PC-3 (cell line): ENCODE measurements at regions of chr1 and their contacts with region 1.

Region 1: GRCh38 chr1:156689035-156689952 is 12.1 kb upstream of the NES start:
- DNase-seq: peak; percentile 97
- ATAC-seq: peak; percentile 81
- H3K4me3 ChIP-seq: peak overlapping the region; percentile 68
- H3K27ac ChIP-seq: no peak overlapping the region
- H3K4me1 ChIP-seq: peaks cover 62% of the 10 kb centered on the region
- H3K27me3 ChIP-seq: no peaks in the 10 kb centered on the region
- CTCF ChIP-seq: peak; percentile 88

Region 2: GRCh38 chr1:156677616-156678596 is 11.4 kb before region 1 on chr1:
- CTCF ChIA-PET with region 1: interaction called, 11 read pairs
- POLR2A ChIA-PET with region 1: interaction called, 18 read pairs
- intact Hi-C with region 1: no loop called
- DNase-seq: peak; percentile 75
- ATAC-seq: peak; percentile 53
- H3K4me3 ChIP-seq: peak overlapping the region; percentile 64
- H3K27ac ChIP-seq: no peak overlapping the region
- H3K4me1 ChIP-seq: peaks cover 28% of the 10 kb centered on the region
- H3K27me3 ChIP-seq: no peaks in the 10 kb centered on the region
- CTCF ChIP-seq: peak; percentile 99

Region 3: DNA sequence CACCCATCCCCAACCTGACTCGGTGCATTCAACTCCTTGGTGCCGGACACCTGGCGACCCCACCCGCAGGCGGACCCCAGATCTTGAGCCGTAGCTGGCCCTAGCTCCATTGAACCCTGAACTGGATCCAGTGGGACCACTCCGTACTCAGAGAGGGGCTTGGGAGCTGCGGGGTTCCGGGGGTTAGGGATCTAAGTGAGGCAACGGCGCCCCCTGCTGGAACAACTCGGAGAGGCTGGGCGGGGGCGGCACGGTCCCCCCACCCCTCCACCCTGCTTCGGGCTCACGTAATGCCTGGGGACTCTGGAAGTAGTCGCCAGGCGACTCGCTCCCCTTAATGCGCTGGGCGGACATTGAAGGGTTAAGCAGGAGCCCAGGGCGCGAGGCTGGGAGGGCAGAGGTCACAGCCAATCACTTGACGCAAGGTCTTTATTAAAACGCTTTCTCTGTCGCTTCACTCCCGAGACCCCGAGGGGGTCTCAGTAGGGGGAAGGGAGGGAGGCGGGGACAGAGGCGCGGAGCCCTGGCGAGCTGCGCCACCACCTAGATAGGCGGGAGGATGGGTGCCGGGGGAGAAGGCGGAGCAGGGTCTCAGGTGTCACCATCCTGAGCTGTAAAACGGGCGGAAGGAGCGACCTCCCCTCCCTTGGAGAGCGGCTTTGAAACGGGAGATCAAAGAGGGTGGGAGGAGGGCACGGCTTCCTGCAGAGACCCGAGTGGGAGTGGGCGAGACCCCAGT is 16.8 kb after region 1 on chr1:
- CTCF ChIA-PET with region 1: interaction called, 84 read pairs
- POLR2A ChIA-PET with region 1: interaction called, 7 read pairs
- intact Hi-C with region 1: loop called (anchors 1 kb)
- DNase-seq: peak; percentile 72
- ATAC-seq: peak; percentile 29
- H3K4me3 ChIP-seq: peak overlapping the region; percentile 71
- H3K27ac ChIP-seq: no peak overlapping the region
- H3K4me1 ChIP-seq: peaks cover 58% of the 10 kb centered on the region
- H3K27me3 ChIP-seq: no peaks in the 10 kb centered on the region
- CTCF ChIP-seq: peak; percentile 99

Region 4: DNA sequence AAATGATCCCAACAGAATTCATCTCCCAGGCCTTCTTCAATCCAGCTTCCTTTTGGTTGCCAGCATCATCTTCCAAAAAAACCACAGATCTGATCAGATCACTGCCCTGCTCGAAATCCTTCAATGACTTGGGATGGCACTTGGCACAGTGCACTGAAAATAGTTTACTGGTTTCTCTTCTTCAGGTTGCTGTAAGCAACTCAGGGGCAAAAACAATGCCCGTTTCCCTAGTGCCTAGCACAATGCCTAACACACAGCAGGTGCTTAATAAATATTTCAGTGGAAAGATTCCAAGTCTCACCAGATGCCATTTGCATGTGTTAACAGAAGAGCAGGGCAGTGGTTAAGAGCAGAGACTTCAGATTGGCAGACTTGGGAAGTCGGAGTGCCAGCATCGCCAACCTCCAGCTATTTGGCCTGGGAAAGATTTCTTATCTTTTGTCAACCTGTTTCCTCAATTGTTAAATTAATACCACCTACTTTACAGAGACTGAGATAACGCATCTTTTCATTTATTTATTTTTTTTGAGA is 28.0 kb after region 1 on chr1:
- CTCF ChIA-PET with region 1: interaction called, 16 read pairs
- POLR2A ChIA-PET with region 1: no interaction called
- intact Hi-C with region 1: no loop called
- DNase-seq: no peak
- ATAC-seq: no peak
- H3K4me3 ChIP-seq: no peak overlapping the region
- H3K27ac ChIP-seq: no peak overlapping the region
- H3K4me1 ChIP-seq: no peaks in the 10 kb centered on the region
- H3K27me3 ChIP-seq: no peaks in the 10 kb centered on the region
- CTCF ChIP-seq: no peak

Region 5: DNA sequence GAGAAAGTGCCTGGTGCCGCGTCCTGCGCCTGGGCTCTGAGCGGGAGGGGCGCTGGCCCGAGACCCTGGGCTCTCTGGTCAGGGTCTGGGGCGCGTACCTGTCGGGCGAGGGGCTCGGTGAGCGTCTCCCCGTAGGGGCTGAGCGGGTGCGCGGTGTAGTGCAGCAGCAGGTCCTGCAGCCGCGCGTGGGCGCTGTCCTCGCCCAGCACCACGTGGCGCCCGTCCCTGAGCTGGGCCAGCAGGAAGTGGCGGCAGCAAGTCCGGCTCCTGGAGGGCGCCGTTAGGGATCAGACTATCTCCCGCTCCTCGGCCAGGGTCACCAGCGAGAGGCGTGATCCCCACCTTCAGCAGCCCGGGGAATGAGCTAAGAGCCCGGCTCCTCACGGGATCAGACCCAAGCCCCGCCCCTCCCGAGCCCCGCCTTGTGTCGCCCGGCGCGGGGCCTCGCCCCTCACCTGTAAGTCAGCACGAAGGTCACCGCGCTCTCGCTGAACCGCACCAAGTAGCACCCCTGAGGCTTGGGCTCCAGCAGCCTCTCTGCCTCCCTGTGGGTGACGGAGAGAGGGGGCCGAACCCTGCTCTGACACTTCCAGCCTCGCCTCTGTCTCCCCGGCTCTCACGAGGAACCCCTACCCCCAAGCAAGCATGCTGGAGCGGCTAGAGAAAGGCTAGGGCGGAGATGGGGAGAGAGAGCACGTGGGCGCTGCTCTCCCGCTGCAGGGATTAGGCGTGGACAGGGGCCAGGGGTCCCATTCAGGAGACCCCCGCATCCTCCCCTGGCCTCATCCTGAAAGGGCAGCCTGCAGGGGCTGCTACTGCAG is 124.7 kb after region 1 on chr1:
- CTCF ChIA-PET with region 1: no interaction called
- POLR2A ChIA-PET with region 1: no interaction called
- intact Hi-C with region 1: no loop called
- DNase-seq: peak; percentile 64
- ATAC-seq: peak; percentile 62
- H3K4me3 ChIP-seq: peak overlapping the region; percentile 59
- H3K27ac ChIP-seq: peak overlapping the region; percentile 83
- H3K4me1 ChIP-seq: peaks cover 45% of the 10 kb centered on the region
- H3K27me3 ChIP-seq: no peaks in the 10 kb centered on the region
- CTCF ChIP-seq: peak; percentile 68

Region 6: DNA sequence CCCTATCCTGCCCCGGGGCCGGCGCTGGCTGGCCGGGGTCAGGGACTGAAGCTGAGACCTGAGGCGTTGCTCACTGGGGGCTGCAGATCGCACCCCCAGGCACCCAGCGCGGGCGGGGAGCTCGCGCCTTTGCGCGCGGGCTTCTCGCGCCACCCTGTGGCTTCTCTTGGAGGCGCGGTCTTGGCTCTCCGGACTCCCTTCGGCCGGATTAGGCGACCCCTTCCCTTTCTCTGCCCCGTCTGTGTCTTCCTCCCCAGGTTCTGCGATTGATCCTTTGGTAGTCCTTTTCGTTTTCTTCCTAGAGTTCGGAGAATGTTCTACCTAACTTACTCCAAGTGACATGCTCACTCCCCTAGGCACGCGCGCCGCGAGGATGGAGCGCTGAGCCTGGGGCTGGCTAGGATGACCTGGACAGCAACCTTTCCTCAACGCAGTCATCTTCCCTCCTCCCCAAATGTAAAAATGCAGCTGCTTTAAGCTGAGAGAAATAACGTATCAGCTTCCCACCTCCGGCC is 170.9 kb after region 1 on chr1:
- CTCF ChIA-PET with region 1: interaction called, 17 read pairs
- POLR2A ChIA-PET with region 1: no interaction called
- intact Hi-C with region 1: no loop called
- DNase-seq: peak; percentile 65
- ATAC-seq: peak; percentile 66
- H3K4me3 ChIP-seq: peak overlapping the region; percentile 63
- H3K27ac ChIP-seq: no peak overlapping the region
- H3K4me1 ChIP-seq: peaks cover 22% of the 10 kb centered on the region
- H3K27me3 ChIP-seq: peaks cover 45% of the 10 kb centered on the region
- CTCF ChIP-seq: peak; percentile 96

Region 7: DNA sequence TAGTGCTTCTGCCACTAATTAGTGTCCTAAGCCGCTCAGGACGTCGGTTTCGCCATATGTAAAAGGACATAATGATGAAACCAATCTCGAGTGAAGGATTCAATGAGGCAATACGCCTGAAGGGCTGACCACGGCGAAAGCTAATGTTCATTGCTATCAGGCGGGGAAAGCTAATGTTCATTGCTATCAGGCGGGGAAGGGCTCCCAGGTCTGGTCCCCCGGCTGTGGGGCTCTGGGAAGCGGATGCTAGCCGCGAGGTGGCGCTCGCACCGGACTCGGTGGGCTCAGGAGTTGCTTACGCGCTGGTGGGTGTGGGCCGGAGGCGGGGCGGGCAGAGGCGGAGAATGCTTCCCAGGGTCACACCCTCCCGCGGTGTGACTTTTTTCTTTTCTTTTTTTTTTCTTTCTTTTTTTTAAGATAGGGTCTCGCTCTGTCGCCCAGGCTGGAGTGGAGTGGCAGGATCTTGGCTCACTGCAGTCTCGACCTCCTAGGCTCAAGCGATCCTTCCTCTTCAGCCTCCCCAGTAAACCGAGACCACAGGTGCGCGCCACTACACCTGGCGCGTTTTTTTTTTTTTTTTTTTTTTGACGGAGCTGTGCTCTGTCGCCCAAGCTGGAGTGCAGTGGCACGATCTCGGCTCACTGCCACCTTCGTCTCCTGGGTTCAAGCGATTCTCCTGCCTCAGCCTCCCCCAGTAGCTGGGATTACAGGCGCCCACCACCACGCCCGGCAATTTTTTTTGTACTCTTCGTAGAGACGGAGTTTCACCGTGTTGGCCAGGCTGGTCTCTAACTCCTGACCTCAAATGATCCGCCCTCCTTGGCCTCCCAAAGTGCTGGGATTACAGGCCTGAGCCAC is 203.1 kb after region 1 on chr1:
- CTCF ChIA-PET with region 1: no interaction called
- POLR2A ChIA-PET with region 1: no interaction called
- intact Hi-C with region 1: loop called (anchors 1 kb)
- DNase-seq: peak; percentile 95
- ATAC-seq: peak; percentile 71
- H3K4me3 ChIP-seq: peak overlapping the region; percentile 54
- H3K27ac ChIP-seq: no peak overlapping the region
- H3K4me1 ChIP-seq: peaks cover 19% of the 10 kb centered on the region
- H3K27me3 ChIP-seq: no peaks in the 10 kb centered on the region
- CTCF ChIP-seq: peak; percentile 91

Region 8: DNA sequence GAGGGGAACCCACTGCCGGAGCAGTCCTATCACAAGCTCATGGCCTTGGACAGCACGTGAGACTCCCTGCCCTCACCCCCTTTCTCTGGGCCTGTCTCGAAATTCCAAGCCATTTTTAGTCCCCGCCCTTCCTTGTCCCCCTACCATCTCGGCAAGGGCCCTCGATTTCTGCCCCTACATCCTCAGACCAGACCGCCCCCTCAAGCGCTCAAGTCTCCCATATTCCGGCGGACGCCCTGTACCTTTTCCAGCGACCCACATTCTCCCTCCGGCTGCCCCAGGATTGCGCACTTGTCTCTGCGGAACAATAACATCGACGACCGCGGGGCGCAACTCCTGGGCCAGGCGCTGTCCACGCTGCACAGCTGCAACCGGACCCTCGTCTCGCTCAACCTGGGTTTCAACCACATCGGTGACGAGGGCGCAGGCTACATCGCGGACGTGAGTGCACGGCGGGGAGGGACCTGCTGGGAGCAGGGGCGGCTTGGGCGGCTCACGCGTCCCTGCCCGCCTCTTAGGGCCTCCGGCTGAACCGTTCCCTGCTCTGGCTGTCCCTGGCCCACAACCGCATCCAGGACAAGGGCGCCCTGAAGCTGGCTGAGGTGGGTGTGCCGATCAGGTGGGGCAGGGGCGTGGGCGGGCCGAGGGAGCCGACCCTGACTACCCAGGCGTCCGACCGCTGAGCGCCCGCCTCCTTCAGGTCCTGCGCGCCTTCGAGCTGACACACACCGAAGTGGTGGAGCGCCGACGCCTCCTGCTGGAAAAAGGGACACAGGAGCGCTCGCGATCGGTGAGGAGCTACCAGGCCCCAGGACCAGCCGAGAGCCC is 238.1 kb after region 1 on chr1:
- CTCF ChIA-PET with region 1: interaction called, 15 read pairs
- POLR2A ChIA-PET with region 1: no interaction called
- intact Hi-C with region 1: no loop called
- DNase-seq: peak; percentile 91
- ATAC-seq: peak; percentile 84
- H3K4me3 ChIP-seq: peak overlapping the region; percentile 72
- H3K27ac ChIP-seq: no peak overlapping the region
- H3K4me1 ChIP-seq: peaks cover 25% of the 10 kb centered on the region
- H3K27me3 ChIP-seq: no peaks in the 10 kb centered on the region
- CTCF ChIP-seq: peak; percentile 93